ENCODE measurements at regions of chr19 and their contacts with region 1.

Region 1: DNA sequence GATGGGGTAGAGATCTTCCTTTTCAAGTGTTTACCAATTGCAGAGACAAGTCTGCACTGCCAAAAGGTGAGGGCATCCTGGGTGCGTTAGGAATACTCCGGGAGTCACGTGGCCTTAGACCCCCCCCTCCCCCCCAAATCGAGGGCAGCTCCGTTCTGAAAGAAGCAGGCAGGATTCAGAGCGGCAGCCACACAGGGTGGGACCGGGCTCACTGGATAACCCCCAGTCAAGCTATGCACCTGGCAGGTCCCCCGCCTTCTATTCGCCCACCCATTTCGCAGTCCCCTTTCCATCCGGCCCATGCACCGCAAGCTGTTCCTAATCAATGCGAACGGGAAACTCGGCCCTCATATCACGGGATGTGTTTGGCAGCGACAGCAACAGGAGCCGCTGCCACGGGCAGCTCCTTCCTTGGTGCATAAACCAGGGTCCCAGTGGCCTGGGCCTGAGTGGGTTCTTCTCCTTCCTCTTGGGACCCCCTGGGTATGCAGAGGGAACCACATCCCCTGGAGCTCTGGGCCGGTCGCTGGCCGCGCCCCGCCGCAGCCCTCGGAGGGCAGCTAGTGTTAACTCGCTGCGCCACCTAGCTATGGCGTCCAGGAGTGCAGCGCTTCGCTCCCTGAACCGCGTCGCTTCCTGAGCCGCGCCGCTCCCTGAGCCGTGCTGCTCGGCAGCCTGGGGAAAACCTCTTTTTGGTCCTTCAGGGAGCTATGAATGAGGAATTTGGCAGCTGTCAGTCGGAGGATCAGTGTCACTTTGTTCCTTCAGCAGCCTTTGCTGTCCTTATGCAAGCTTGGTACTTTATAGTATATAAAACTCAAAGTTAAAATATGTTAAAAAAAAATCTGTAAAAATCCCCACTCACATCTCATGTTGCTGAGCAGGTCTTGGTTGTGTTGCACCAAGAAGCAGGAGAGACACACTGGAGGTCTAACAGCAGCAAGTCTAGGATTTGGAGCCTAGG is 41.4 kb downstream of the LYL1 start:
- DNase-seq: peak; percentile 50 to 80 (median 66)
- ATAC-seq: peak; percentile 98
- H3K4me3 ChIP-seq: peak overlapping the region; percentile 69
- H3K4me3 Mint-ChIP-seq: peak overlapping the region; percentile 71 to 87 (median 84)
- H3K27ac ChIP-seq: no peak overlapping the region
- H3K27ac Mint-ChIP-seq: peak overlapping the region in 2 of 9 donors; percentile 21 to 36
- H3K4me1 ChIP-seq: no peaks in the 10 kb centered on the region
- H3K4me1 Mint-ChIP-seq: peaks cover 4 to 11% (median 10%) of the 10 kb centered on the region in 7 donors
- H3K27me3 ChIP-seq: no peaks in the 10 kb centered on the region
- H3K27me3 Mint-ChIP-seq: peaks cover 0 to 34% (median 16%) of the 10 kb centered on the region in 5 donors

Region 2: DNA sequence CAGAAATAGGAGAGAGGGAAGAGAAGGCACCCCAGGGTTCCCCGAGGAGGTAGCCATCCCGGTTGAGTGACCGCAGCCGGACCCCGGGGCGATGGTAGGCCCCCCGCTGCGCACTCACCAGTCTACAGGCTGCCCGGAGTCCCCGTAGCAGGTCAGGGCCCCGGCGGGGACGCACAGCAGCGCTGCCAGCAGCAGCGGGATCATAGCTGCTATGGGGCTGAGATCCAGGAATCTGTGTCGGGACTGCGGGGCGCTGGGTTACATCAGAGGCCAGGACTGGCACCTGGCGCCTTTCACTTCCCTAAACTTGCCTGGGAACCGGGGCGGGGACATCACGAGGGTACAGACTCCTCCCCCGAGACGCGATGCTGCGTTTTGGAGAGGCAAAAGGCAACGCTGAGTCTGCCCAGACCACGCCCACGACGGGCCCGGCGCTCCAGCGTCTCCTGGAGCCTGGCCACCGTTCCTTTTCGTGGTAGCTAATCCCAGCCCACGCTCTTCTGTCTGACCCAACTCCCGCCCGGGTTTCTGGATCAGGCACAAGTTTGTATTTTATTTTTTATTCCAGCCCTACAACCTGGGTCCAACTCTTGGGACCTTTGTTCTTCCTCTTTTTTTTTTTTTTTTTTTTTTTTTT is 180.0 kb before region 1 on chr19 and contains the start of gene DNASE2:
- CTCF ChIA-PET with region 1: interaction called, 3 read pairs
- POLR2A ChIA-PET with region 1: no interaction called
- intact Hi-C with region 1: loop called in 1 of 2 experiments (anchors 1 kb)
- DNase-seq: peak; percentile 69 to 89 (median 81)
- ATAC-seq: peak; percentile 81
- H3K4me3 ChIP-seq: peak within 1 kb of the TSS; percentile 72
- H3K4me3 Mint-ChIP-seq: peak within 1 kb of the TSS; percentile 87 to 94 (median 88)
- H3K27ac ChIP-seq: peak within 1 kb of the TSS; percentile 77
- H3K27ac Mint-ChIP-seq: peak within 1 kb of the TSS; percentile 76 to 94 (median 89)
- H3K4me1 ChIP-seq: peaks cover 10 to 11% of the 10 kb centered on the region in 2 donors
- H3K4me1 Mint-ChIP-seq: peaks cover 20 to 39% (median 30%) of the 10 kb centered on the region in 7 donors
- H3K27me3 ChIP-seq: no peaks in the 10 kb centered on the region
- H3K27me3 Mint-ChIP-seq: peaks cover 0 to 1% (median 0%) of the 10 kb centered on the region in 5 donors
- total RNA-seq, gene DNASE2: 14.2 to 29.9 (median 28.1) TPM

Region 3: DNA sequence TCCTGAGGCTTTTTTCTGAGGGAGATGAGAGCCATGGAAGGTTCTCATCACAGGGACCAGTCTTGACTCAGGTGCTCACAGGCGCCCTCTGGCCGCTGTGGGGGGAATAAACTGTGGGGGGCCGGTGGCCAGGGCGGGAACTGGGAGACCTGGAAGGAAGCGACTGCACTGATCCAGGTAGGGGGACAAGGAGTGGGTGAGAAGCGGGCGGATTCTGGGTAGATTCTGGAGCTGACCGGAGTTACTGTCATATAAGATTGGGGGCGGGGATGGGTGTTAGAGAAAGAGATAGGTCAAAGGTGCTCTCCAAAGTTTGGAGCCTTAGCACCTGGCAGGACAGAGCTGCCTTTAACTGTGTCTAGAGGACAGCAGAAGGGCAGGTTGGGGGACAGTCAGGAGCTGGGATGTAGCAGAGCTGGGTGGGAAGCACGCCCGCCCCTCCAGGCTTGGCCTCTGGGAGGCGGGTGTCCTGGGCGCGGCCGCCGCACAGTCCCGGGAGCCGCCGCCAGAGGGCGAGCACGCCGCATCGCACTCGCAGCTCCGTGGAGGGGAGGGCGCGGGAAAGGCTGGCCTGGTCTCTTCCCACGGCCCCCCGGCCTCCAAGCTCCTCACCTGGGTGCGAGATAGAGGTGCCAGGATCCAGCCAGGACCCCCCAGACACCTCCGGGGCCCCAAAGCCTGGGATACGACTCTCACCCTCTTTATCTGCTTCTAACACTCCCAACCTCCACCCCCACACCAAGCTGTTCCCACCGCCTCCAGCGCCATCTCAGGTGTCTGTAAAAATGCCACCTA is 96.0 kb before region 1 on chr19:
- CTCF ChIA-PET with region 1: interaction called, 9 read pairs
- POLR2A ChIA-PET with region 1: no interaction called
- intact Hi-C with region 1: loop called in 1 of 2 experiments (anchors 1 kb)
- DNase-seq: peak; percentile 57 to 91 (median 78)
- ATAC-seq: peak; percentile 98
- H3K4me3 ChIP-seq: peak overlapping the region; percentile 87
- H3K4me3 Mint-ChIP-seq: peak overlapping the region; percentile 78 to 92 (median 88)
- H3K27ac ChIP-seq: peak overlapping the region; percentile 21
- H3K27ac Mint-ChIP-seq: peak overlapping the region in 8 of 9 donors; percentile 10 to 86 (median 54)
- H3K4me1 ChIP-seq: peaks cover 3 to 9% of the 10 kb centered on the region in 2 donors
- H3K4me1 Mint-ChIP-seq: peaks cover 5 to 11% (median 7%) of the 10 kb centered on the region in 7 donors
- H3K27me3 ChIP-seq: no peaks in the 10 kb centered on the region
- H3K27me3 Mint-ChIP-seq: no peaks in the 10 kb centered on the region

Region 4: DNA sequence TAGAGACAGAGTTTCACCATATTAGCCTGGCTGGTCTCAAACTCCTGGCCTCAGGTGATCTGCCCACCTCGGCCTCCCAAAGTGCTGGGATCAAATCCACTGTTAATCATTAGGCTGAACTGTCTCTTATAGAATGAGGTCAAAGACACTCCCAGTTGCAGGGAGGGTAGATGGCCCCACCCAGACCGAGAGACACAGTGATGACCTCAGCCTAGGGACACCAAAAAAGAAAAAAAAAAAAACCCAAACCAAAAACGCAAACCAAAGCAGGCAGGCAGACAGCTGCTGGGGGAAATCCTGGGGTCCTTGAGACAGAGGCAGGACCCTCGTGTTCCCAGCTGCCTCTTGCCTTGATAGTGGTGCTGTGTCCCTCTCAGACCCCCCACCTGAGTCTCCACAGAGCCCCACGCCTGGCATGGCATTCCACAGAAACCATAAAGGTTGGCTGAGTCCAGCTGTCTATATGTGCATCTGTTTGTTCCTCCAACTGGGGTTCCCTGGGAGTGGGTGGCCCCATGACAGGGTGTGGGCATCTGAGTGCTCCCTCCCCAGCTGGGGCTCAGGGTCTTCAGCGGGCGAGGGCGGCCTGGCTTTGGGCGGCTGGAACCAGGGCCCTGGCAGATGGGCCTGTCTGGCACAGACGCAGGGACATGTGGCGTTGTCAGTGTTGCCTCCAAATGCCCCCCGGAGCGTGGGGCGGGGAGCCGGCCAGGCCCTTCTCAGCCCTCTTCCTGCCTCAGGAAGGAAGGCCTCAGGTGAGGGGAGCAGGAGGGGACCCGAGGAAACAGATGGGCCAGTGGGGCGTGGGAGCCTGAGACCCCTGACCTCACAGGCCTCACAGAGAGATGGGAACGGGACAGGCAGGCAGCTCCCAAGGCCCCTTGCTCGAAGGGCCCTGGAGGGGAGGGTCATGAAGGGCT is 86.7 kb before region 1 on chr19:
- CTCF ChIA-PET with region 1: interaction called, 45 read pairs
- POLR2A ChIA-PET with region 1: interaction called, 3 read pairs
- intact Hi-C with region 1: loop called (anchors 1 kb)
- DNase-seq: no peak
- ATAC-seq: no peak
- H3K4me3 ChIP-seq: no peak overlapping the region
- H3K4me3 Mint-ChIP-seq: no peak overlapping the region
- H3K27ac ChIP-seq: no peak overlapping the region
- H3K27ac Mint-ChIP-seq: no peak overlapping the region
- H3K4me1 ChIP-seq: peaks cover 0 to 3% of the 10 kb centered on the region in 2 donors
- H3K4me1 Mint-ChIP-seq: peaks cover 2 to 7% (median 5%) of the 10 kb centered on the region in 7 donors
- H3K27me3 ChIP-seq: no peaks in the 10 kb centered on the region
- H3K27me3 Mint-ChIP-seq: peaks cover 7 to 17% (median 16%) of the 10 kb centered on the region in 5 donors

Region 5: GRCh38 chr19:12983542-12984142 is 77.6 kb before region 1 on chr19:
- CTCF ChIA-PET with region 1: interaction called, 45 read pairs
- POLR2A ChIA-PET with region 1: no interaction called
- intact Hi-C with region 1: loop called (anchors 1 kb)
- DNase-seq: peak; percentile 72 to 93 (median 84)
- ATAC-seq: peak; percentile 94
- H3K4me3 ChIP-seq: no peak overlapping the region
- H3K4me3 Mint-ChIP-seq: no peak overlapping the region
- H3K27ac ChIP-seq: peak overlapping the region; percentile 32
- H3K27ac Mint-ChIP-seq: no peak overlapping the region
- H3K4me1 ChIP-seq: peaks cover 6 to 16% of the 10 kb centered on the region in 2 donors
- H3K4me1 Mint-ChIP-seq: peaks cover 0 to 9% (median 0%) of the 10 kb centered on the region in 7 donors
- H3K27me3 ChIP-seq: no peaks in the 10 kb centered on the region
- H3K27me3 Mint-ChIP-seq: peaks cover 0 to 11% (median 0%) of the 10 kb centered on the region in 5 donors

Region 6: GRCh38 chr19:13012690-13013608 is 48.3 kb before region 1 on chr19:
- CTCF ChIA-PET with region 1: interaction called, 7 read pairs
- POLR2A ChIA-PET with region 1: interaction called, 3 read pairs
- intact Hi-C with region 1: loop called in 1 of 2 experiments (anchors 5 kb)
- DNase-seq: peak in 3 of 9 donors; percentile 25 to 39 (median 27)
- ATAC-seq: peak; percentile 64
- H3K4me3 ChIP-seq: peak overlapping the region; percentile 51
- H3K4me3 Mint-ChIP-seq: peak overlapping the region; percentile 81 to 95 (median 90)
- H3K27ac ChIP-seq: no peak overlapping the region
- H3K27ac Mint-ChIP-seq: peak overlapping the region in 6 of 9 donors; percentile 7 to 77 (median 62)
- H3K4me1 ChIP-seq: peaks cover 5 to 9% of the 10 kb centered on the region in 2 donors
- H3K4me1 Mint-ChIP-seq: peaks cover 17 to 33% (median 27%) of the 10 kb centered on the region in 7 donors
- H3K27me3 ChIP-seq: peaks cover 3 to 32% of the 10 kb centered on the region in 2 donors
- H3K27me3 Mint-ChIP-seq: peaks cover 46 to 80% (median 59%) of the 10 kb centered on the region in 5 donors

Region 7: GRCh38 chr19:13099073-13099999 is 38.1 kb after region 1 on chr19:
- CTCF ChIA-PET with region 1: interaction called, 12 read pairs
- POLR2A ChIA-PET with region 1: no interaction called
- intact Hi-C with region 1: loop called in 1 of 2 experiments (anchors 1 kb)
- DNase-seq: peak; percentile 67 to 85 (median 81)
- ATAC-seq: peak; percentile 66
- H3K4me3 ChIP-seq: peak overlapping the region; percentile 74
- H3K4me3 Mint-ChIP-seq: peak overlapping the region; percentile 80 to 90 (median 86)
- H3K27ac ChIP-seq: peak overlapping the region; percentile 82
- H3K27ac Mint-ChIP-seq: peak overlapping the region; percentile 88 to 99 (median 93)
- H3K4me1 ChIP-seq: peaks cover 70 to 71% of the 10 kb centered on the region in 2 donors
- H3K4me1 Mint-ChIP-seq: peaks cover 17 to 64% (median 53%) of the 10 kb centered on the region in 7 donors
- H3K27me3 ChIP-seq: peaks cover 0 to 6% of the 10 kb centered on the region in 2 donors
- H3K27me3 Mint-ChIP-seq: peaks cover 6 to 35% (median 16%) of the 10 kb centered on the region in 5 donors